Activated B cell treated with CpG ODN at 0.5 μM for 24 hours (primary cell): ENCODE measurements at regions of chr17 and their contacts with region 1.

Region 1: DNA sequence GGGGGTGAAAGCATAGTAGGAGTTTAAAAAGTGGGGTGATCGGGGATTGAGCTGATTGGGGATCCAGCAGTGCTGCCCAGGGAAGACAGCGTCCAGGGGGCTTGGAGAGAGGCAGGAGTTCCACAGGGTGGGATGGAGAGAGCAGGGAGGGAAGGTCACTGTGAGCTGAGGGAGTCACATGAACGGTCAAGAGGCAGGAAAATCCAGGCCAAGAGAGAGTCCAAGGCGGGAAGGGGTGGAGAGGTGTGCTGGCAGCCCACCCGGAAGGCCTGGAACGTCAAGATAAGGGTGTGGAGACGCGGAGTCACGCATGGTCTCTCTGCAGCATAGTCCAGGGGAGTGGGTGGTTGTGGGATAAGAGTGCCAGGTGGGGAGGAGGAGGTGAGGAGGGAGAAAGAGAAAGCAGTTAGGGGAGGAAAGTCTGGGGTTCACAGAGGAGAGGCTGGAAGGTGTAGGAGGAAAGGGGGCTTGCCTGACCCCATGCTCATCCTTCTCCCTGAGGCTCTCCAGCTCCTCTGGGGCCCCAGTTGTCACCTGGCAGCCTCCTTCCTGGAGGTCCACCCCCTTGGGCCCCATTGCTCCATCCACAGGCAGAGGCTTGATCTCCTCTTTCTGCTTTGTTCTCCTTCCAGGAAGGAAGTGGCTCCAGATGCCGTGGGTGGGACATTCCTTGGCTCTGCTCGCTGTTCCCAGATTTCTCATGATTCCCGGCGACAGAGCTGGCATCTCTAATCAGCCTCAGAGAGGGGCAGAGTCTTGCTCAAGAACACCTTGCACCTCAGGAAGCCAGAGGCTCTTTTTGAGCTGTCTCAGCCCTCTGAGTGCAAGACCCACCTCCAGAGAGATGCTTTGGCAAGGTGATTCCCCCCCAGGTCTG is 28.7 kb downstream of the CCR7 start:
- DNase-seq: peak; percentile 15
- ATAC-seq: no peak
- H3K4me3 Mint-ChIP-seq: no peak overlapping the region
- H3K27ac Mint-ChIP-seq: peak overlapping the region; percentile 59
- H3K4me1 Mint-ChIP-seq: peaks cover 91% of the 10 kb centered on the region
- H3K27me3 Mint-ChIP-seq: no peaks in the 10 kb centered on the region
- CTCF ChIP-seq: no peak

Region 2: DNA sequence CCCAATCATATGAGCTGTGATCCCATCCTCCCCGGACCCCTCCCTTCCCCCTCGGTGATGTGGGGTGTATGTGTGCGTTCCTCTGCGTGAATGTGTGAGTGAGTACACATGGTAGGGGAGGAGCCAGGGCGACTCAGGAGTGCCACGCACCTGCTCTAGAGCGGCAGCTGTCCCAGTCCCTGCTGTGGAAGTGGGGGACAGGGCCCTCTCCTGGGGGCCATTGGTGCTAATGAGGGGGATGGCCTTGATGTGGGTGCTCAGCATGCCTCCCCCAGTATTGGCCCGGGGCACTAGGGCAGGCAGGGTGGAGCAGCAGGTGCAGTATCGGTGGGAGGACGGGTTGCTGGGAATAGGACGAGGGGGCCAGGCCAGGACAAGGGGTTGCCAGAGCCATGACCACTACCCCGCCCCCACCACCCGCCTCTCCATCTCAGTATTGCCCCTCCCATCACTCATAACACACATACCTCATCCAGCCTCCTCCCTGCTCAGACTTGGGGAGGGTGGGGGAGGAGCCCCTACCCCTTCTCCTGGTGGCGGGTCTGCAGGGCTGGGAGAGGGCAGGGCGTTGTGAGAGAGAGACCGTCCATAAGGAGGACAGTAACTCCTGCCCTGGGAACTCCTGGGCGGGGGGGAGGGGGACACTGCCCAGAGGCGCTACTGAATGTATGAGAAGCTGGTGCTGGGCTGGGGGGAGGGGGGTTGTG is 444.7 kb before region 1 on chr17:
- CTCF ChIA-PET with region 1: no interaction called
- POLR2A ChIA-PET with region 1: interaction called, 12 read pairs
- intact Hi-C with region 1: no loop called
- DNase-seq: no peak
- ATAC-seq: no peak
- H3K4me3 Mint-ChIP-seq: no peak overlapping the region
- H3K27ac Mint-ChIP-seq: no peak overlapping the region
- H3K4me1 Mint-ChIP-seq: peaks cover 28% of the 10 kb centered on the region
- H3K27me3 Mint-ChIP-seq: no peaks in the 10 kb centered on the region
- CTCF ChIP-seq: no peak

Region 3: DNA sequence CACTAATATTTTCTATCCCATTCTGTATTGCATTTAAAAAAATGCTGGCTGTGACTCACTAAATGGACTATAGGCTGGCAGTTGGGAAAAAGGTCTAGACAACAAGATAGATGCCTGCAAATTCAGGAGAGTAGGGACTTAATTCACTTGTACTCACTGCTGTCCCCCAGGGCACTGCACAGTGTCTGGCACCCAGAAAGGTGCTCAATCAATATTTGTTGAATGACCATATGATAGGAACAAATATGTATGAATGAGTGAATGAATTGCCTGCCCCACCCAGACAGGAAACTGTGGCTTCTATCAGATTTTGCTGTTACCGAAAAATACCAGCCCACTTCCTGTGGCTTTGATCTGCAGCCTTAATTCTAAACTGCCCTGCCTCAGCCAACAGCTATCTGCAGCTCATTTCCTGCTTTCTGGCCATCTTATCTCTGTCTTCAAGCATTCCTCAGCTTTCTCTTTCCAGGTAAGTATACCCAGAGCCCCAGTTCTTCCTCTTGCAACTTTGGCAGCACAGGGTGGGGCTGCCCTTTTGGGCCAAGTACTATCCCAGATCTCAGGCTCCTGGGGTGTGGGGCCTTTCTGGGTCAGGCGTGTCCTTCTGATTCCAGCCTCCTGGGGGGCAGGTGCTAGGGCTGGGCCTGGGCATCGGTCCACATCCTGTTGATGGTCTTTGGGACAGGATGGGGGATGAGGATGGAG is 19.8 kb before region 1 on chr17:
- CTCF ChIA-PET with region 1: interaction called, 11 read pairs
- POLR2A ChIA-PET with region 1: interaction called, 31 read pairs
- intact Hi-C with region 1: loop called (anchors 1 kb)
- DNase-seq: no peak
- ATAC-seq: peak; percentile 87
- H3K4me3 Mint-ChIP-seq: peak overlapping the region; percentile 74
- H3K27ac Mint-ChIP-seq: peak overlapping the region; percentile 69
- H3K4me1 Mint-ChIP-seq: peaks cover 62% of the 10 kb centered on the region
- H3K27me3 Mint-ChIP-seq: no peaks in the 10 kb centered on the region
- CTCF ChIP-seq: no peak

Region 4: DNA sequence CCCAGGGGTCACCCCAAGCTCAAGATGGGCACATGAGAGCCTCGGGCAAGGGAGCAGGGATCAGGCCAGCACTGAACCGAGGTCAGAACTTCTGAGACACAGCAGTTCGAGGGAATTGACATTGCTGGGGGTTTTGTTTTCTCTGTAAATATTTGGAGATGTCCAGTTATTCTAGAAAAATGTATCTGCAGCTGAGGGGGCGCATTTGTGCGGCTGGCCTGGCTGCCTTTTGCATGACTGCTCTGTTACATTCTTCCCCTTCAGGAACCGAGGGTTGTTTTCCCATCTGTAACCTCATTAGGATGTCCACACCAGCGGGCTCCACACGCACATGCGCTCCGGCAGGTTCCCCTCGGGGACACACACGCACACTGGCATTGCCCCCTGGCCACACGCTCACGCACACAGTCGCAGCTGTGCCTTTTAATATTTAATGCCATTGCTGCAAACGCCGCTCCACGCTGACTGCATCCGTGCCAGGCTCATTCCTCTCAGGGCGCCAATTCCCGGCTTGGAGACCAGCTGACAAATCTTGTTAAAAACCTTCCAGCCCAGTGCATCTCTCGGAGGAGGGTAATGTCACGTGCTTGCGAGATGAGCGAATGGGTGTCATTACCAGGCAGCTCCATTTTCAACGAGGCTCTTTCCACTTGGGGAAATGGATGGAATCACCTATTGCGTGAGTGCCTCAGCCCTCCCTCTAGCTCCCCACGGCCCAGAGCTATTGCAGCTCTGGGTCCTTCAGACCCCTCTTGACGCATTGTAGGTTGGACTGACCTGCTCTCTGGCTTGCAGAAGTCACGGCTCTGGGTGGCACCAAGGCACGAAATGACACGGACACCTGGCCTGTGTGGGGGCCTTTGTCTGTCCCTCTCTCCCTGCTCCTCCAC is 15.6 kb after region 1 on chr17:
- CTCF ChIA-PET with region 1: interaction called, 112 read pairs
- POLR2A ChIA-PET with region 1: interaction called, 1,450 read pairs
- intact Hi-C with region 1: no loop called
- DNase-seq: peak; percentile 32
- ATAC-seq: peak; percentile 3
- H3K4me3 Mint-ChIP-seq: peak overlapping the region; percentile 36
- H3K27ac Mint-ChIP-seq: peak overlapping the region; percentile 99
- H3K4me1 Mint-ChIP-seq: peaks cover 100% of the 10 kb centered on the region
- H3K27me3 Mint-ChIP-seq: no peaks in the 10 kb centered on the region
- CTCF ChIP-seq: no peak

Region 5: DNA sequence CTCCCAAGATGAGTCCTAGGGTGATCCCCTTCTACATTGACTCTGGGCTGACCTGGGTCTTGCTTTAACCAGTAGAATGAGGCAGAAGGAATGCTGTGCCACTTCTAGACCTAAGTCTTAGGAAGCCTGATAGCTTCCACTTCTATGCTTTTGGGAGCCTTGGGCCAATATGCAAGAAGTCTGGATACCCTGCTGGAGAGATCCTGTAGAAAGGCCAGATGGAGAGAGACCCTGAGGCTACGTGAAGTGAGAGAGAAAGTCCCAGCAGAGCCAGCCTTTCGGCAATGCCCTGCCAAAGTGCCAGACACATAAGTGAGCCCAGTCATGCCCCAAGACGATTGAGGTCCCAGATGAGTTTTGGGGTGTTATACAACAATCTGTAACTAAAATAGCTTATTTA is 126.7 kb after region 1 on chr17:
- CTCF ChIA-PET with region 1: no interaction called
- POLR2A ChIA-PET with region 1: no interaction called
- intact Hi-C with region 1: no loop called
- DNase-seq: no peak
- ATAC-seq: no peak
- H3K4me3 Mint-ChIP-seq: no peak overlapping the region
- H3K27ac Mint-ChIP-seq: no peak overlapping the region
- H3K4me1 Mint-ChIP-seq: peaks cover 6% of the 10 kb centered on the region
- H3K27me3 Mint-ChIP-seq: peaks cover 44% of the 10 kb centered on the region
- CTCF ChIP-seq: no peak

Region 6: DNA sequence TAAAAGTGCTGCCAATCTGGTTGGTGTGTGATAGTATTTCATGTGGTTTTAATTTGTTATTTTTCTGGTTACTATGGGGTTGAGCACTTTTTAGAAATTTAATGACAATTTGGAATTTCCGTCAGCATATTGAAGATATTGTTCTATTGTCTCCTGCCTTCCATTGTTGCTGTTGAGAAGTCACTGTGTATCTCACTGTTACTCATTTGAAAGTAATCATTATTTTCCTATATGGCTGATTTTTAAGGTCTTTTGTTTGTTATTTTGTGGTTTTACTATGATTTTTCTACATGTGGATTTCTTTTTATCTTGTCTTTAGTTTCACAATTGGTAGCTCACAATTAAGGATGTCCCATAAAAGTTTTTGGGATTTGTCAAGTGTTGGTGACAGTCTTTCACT is 227.2 kb after region 1 on chr17:
- CTCF ChIA-PET with region 1: no interaction called
- POLR2A ChIA-PET with region 1: no interaction called
- intact Hi-C with region 1: no loop called
- DNase-seq: no peak
- ATAC-seq: no peak
- H3K4me3 Mint-ChIP-seq: no peak overlapping the region
- H3K27ac Mint-ChIP-seq: no peak overlapping the region
- H3K4me1 Mint-ChIP-seq: no peaks in the 10 kb centered on the region
- H3K27me3 Mint-ChIP-seq: peaks cover 21% of the 10 kb centered on the region
- CTCF ChIP-seq: no peak